ENCODE measurements at regions of chr18 and their contacts with region 1.

Region 1: GRCh38 chr18:77108001-77108692 is 24.4 kb downstream of the MBP start:
- DNase-seq: no peak
- H3K4me3 Mint-ChIP-seq: peak overlapping the region; percentile 65
- H3K27ac Mint-ChIP-seq: peak overlapping the region; percentile 65
- H3K4me1 Mint-ChIP-seq: peaks cover 84% of the 10 kb centered on the region
- H3K27me3 Mint-ChIP-seq: no peaks in the 10 kb centered on the region

Region 2: DNA sequence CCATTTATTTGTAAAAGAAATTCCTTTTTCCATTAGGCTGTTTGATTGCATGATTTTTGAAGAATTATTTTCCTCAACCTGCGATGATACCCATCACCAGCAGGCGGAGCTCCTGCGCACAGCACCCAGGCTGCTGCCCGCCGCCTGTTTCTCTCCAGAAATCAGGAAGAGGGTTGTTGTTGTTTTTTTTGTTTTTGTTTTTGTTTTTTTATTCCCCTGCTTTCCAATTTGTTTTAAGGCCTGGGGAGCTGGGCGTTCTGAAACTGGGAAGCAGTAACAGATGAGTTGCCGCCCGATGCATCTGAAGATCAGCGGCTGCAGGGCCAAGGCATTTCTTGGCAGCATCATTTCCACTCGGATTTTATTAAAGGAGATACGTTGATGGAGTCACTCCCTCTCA is 107.6 kb before region 1 on chr18:
- intact Hi-C with region 1: no loop called
- DNase-seq: peak; percentile 83
- H3K4me3 Mint-ChIP-seq: no peak overlapping the region
- H3K27ac Mint-ChIP-seq: no peak overlapping the region
- H3K4me1 Mint-ChIP-seq: peaks cover 31% of the 10 kb centered on the region
- H3K27me3 Mint-ChIP-seq: peaks cover 4% of the 10 kb centered on the region

Region 3: DNA sequence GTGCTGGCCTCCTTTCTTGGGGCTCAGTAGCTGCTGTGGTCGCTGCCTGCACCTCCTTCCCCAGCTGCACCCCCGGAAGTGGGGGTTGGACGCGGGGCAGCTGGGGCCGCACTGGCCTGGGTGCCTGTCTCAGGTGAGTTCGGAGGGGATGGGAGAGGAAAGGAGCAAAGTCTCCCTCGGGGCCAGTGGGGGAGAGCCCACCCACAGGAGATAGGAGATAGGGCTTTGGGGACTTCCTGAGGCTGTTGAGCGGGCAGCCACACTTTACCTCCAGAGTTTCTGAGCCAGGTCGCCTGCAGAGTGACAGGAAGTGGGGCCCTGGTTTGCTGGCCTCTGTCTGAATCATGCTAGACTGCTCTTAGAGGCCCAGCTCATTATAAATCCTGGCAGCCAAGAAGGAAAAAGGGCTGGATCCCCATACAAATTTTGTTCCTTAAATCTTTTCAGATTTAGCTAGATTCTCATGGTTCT is 16.3 kb after region 1 on chr18:
- intact Hi-C with region 1: no loop called
- DNase-seq: peak; percentile 87
- H3K4me3 Mint-ChIP-seq: peak overlapping the region; percentile 81
- H3K27ac Mint-ChIP-seq: peak overlapping the region; percentile 89
- H3K4me1 Mint-ChIP-seq: peaks cover 78% of the 10 kb centered on the region
- H3K27me3 Mint-ChIP-seq: no peaks in the 10 kb centered on the region

Region 4: GRCh38 chr18:77140439-77141109 is 32.4 kb after region 1 on chr18:
- intact Hi-C with region 1: loop called (anchors 5 kb)
- DNase-seq: peak; percentile 83
- H3K4me3 Mint-ChIP-seq: no peak overlapping the region
- H3K27ac Mint-ChIP-seq: peak overlapping the region; percentile 65
- H3K4me1 Mint-ChIP-seq: peaks cover 27% of the 10 kb centered on the region
- H3K27me3 Mint-ChIP-seq: no peaks in the 10 kb centered on the region

Measured in activated CD4-positive, alpha-beta T cell treated with anti-CD3 and anti-CD28 coated beads, Interleukin-2, amount 10 ng/mL, durations not matched to agents 24 days and 14 days (primary cell).